ENCODE measurements at regions of chr9 and their contacts with region 1.

Region 1: GRCh38 chr9:90827181-90827871 is 25.7 kb downstream of the SYK start:
- DNase-seq: peak; percentile 77
- ATAC-seq: peak; percentile 79
- H3K4me3 ChIP-seq: peak overlapping the region; percentile 75
- H3K27ac ChIP-seq: peak overlapping the region; percentile 76
- H3K4me1 ChIP-seq: peaks cover 36% of the 10 kb centered on the region
- H3K27me3 ChIP-seq: no peaks in the 10 kb centered on the region
- CTCF ChIP-seq: no peak
- EP300 ChIP-seq: peak; percentile 34 to 42; a peak in 2 of 4 replicates
- POLR2A ChIP-seq: peak; percentile 53
- RAD21 ChIP-seq: no peak

Region 2: GRCh38 chr9:90801583-90802289 is 25.6 kb before region 1 on chr9 and contains the start of gene SYK:
- CTCF ChIA-PET with region 1: interaction called, 4 read pairs
- POLR2A ChIA-PET with region 1: interaction called, 6 read pairs
- RAD21 ChIA-PET with region 1: interaction called, 3 read pairs
- SMC1A ChIA-PET with region 1: interaction called, 20 read pairs
- in situ Hi-C with region 1: no loop called
- intact Hi-C with region 1: no loop called
- DNase-seq: no peak
- ATAC-seq: peak; percentile 72
- H3K4me3 ChIP-seq: peak within 1 kb of the TSS; percentile 81
- H3K27ac ChIP-seq: peak within 1 kb of the TSS; percentile 83
- H3K4me1 ChIP-seq: peaks cover 25% of the 10 kb centered on the region
- H3K27me3 ChIP-seq: no peaks in the 10 kb centered on the region
- CTCF ChIP-seq: no peak
- EP300 ChIP-seq: no peak
- POLR2A ChIP-seq: peak; percentile 66; the same call in 1 of the 2 replicates
- RAD21 ChIP-seq: no peak
- polyA plus RNA-seq, gene SYK: 23.1 to 24.8 TPM

Region 3: DNA sequence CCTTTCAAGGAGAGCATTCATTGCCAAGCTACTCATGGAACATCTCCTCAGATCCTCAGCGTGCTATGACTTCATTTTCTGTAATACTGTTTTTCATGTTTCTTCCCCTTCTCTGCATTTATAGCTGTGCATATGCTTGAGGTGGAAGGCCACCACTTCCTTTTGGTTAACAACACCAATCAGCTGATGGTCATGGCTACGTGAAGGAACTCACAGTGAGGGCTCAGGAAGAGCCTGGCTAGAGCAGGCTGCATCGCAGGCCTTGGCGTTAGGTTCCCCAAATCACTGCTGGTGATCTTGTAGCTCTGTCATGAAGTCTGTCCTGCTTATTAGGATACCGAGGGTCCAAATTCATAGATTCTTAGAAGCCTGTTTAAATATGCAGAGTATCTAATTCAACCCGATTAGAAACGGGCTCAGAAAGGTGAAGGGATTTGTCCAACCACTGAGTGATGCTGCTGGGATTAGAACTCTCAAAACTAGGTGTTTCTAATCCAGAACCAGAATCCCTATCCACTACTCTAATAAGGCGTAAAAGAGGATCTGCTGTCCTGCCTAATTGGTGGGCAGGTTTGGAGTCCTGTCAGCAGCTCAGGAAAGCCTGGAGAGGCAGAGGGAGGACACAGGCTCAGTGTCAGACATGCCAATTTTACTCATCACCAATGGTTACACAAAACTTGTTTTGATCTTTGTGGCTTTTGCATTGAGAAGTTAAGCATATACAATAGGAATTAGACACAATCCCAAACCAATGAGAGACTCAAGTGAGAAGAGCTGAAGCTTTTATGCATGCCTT is 18.2 kb before region 1 on chr9:
- CTCF ChIA-PET with region 1: interaction called, 3 read pairs
- POLR2A ChIA-PET with region 1: interaction called, 6 read pairs
- RAD21 ChIA-PET with region 1: interaction called, 3 read pairs
- SMC1A ChIA-PET with region 1: interaction called, 20 read pairs
- in situ Hi-C with region 1: no loop called
- intact Hi-C with region 1: loop called (anchors 2 kb)
- DNase-seq: no peak
- ATAC-seq: peak; percentile 14; the same call in 1 of the 3 replicates
- H3K4me3 ChIP-seq: peak overlapping the region; percentile 8; the same call in 1 of the 2 replicates
- H3K27ac ChIP-seq: peak overlapping the region; percentile 10; the same call in 1 of the 2 replicates
- H3K4me1 ChIP-seq: peaks cover 59% of the 10 kb centered on the region
- H3K27me3 ChIP-seq: no peaks in the 10 kb centered on the region
- CTCF ChIP-seq: no peak
- EP300 ChIP-seq: no peak
- POLR2A ChIP-seq: no peak
- RAD21 ChIP-seq: no peak

Region 4: DNA sequence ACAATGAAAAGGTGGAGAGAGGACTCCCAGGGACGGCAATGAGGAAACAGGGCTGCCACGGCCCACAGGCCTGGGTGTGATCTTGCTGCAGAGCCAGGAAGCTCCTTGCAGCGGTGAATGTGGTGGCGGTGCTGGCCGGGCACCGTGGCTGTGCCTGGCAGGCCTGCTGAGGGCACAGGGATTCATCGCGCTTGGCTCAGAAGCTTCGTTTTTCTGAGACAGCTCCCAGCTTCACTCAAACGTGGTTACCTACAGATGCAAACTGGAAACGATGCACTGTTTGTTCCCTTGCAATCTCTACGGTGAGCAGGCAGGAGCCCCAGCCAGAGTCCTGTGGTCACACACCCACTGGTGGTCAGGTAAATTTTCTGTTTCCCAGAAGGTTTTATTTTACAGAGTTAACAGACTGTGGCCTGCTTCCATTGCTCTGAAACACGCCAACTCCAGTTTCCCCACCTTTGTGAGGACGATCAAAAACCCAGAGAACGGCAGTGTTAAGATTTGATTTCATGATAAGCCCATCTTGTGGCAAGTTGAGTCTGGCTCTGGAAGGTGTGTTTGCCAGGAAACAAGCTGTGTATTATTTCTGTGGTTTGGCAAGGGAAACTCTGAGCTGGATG is 350.4 kb after region 1 on chr9:
- CTCF ChIA-PET with region 1: no interaction called
- POLR2A ChIA-PET with region 1: no interaction called
- RAD21 ChIA-PET with region 1: no interaction called
- SMC1A ChIA-PET with region 1: no interaction called
- in situ Hi-C with region 1: no loop called
- intact Hi-C with region 1: no loop called
- DNase-seq: no peak
- ATAC-seq: peak; percentile 17; the same call in 1 of the 3 replicates
- H3K4me3 ChIP-seq: no peak overlapping the region
- H3K27ac ChIP-seq: no peak overlapping the region
- H3K4me1 ChIP-seq: no peaks in the 10 kb centered on the region
- H3K27me3 ChIP-seq: no peaks in the 10 kb centered on the region; a peak in 3 of 4 replicates
- CTCF ChIP-seq: no peak
- EP300 ChIP-seq: no peak
- POLR2A ChIP-seq: no peak
- RAD21 ChIP-seq: no peak